ENCODE measurements at regions of chr4 and their contacts with region 1.

Region 1: GRCh38 chr4:26320538-26321325 is at the start of gene RBPJ:
- DNase-seq: peak in 1 of 2 donors; percentile 95
- H3K4me3 ChIP-seq: peak within 1 kb of the TSS; percentile 83 to 88
- H3K27ac ChIP-seq: peak within 1 kb of the TSS; percentile 98
- H3K4me1 ChIP-seq: peaks cover 49% of the 10 kb centered on the region
- H3K27me3 ChIP-seq: no peaks in the 10 kb centered on the region
- CTCF ChIP-seq: peak in 1 of 3 experiments; percentile 48
- POLR2A ChIP-seq: peak in 1 of 2 donors; percentile 56
- total RNA-seq, gene RBPJ: 50.8 TPM

Region 2: DNA sequence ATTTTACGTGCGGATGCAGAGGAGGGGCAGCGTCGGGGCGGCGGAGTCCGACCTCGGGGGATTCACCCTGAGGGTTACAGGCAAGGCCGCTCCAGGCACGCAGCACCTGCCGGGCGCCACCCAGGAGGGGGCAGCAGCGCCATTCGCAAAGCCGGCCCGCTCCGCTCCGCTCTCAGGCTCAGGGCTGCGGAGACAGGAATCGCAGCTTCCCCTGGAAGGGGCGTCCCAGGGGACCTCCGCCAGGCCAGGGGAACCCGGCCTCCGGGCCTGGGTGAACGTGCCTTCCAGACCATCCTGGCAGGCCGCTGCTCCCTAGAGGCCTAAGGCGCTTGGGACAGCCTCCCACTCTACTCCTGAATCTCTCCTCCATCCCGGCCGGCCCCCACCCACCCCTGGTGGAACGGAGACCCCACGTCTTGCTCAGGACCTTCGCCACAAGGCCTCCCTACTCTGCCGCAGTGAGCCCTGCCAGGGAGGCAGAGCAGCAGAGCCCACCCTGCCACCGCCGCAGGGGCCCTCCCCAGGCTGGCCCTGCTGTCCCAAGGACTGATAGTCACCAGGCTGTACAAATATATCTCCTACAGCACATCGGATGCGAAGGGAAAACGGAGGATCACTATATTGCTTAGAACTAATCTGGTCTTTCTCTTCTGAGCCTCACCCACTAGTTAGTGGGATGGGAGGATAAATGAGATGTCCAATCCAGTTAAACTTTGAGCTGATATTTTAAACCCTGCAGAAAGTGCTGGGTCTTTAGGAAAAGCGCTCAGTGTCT is 291.8 kb before region 1 on chr4:
- intact Hi-C with region 1: loop called (anchors 1 kb)
- DNase-seq: peak in 1 of 2 donors; percentile 86
- H3K4me3 ChIP-seq: peak overlapping the region in 1 of 2 donors; percentile 23
- H3K27ac ChIP-seq: peak overlapping the region; percentile 18
- H3K4me1 ChIP-seq: peaks cover 21% of the 10 kb centered on the region
- H3K27me3 ChIP-seq: no peaks in the 10 kb centered on the region
- CTCF ChIP-seq: peak; percentile 24 to 70 (median 60)
- POLR2A ChIP-seq: no peak

Region 3: GRCh38 chr4:26081795-26082498 is 238.8 kb before region 1 on chr4:
- intact Hi-C with region 1: loop called (anchors 5 kb)
- DNase-seq: no peak
- H3K4me3 ChIP-seq: no peak overlapping the region
- H3K27ac ChIP-seq: no peak overlapping the region
- H3K4me1 ChIP-seq: peaks cover 21% of the 10 kb centered on the region
- H3K27me3 ChIP-seq: no peaks in the 10 kb centered on the region
- CTCF ChIP-seq: peak; percentile 2 to 55 (median 51)
- POLR2A ChIP-seq: no peak

Region 4: DNA sequence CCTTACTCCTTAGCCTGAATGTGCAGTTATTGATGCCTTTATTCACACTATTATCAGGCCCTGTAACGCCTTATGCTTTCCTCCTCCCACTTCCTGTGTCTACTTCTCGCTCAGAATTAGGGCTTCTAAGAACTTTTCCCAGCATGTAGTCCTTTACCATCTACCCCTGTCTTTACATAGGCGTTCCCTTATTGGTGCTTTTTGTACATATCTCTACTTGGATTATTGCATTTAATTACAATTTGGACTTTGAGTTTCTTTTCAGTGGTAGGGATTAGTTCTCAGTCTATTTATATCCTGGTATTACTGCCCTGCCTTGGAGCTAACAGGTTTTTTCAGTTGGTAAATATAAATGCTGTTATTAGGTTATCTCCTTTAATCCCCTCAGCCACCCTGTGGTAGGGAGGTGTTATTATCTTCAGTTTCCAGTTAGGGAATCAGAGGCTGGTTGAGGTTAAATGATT is 84.0 kb after region 1 on chr4:
- intact Hi-C with region 1: loop called (anchors 10 kb)
- DNase-seq: no peak
- H3K4me3 ChIP-seq: no peak overlapping the region
- H3K27ac ChIP-seq: no peak overlapping the region
- H3K4me1 ChIP-seq: no peaks in the 10 kb centered on the region
- H3K27me3 ChIP-seq: no peaks in the 10 kb centered on the region
- CTCF ChIP-seq: no peak
- POLR2A ChIP-seq: no peak

Region 5: DNA sequence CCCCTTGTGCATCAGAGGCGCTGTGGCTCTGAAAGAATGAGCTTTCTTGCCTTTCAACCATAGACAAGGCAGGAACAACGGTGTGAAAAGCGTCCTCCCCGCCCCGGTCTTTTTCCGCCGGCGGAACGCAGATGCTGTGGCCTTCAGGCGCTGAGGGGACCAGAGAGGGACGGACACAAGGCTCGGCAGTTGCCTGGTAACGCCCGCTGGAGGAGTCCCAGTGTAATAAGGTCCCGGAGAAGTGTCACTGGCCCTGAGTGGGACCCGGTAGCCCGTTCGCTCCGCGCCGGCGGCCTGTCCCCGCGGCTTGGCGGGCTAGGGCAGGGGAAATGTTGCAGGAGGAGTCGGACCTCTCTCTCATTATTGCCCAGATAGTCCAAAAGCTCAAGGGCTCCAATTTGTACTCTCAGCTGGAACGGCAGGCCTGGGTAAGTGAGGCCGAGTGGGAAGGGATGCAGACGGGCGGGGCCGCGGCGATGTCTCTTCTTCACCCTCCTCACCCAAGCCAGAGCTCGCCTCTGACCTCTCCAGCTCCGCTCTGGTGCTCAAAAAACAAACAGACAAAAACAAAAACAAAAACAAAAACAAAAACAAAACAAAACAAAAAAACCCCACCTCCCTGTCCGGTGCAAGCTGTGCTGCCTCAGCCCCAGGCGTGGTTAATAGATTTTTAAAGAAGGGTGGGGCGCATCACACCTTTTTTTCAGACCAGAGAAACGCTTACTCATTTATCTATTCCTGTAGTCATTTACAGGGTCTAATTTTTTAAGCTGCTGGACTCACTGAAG is 263.3 kb after region 1 on chr4 and contains the start of gene TBC1D19:
- intact Hi-C with region 1: no loop called
- DNase-seq: peak in 1 of 2 donors; percentile 88
- H3K4me3 ChIP-seq: peak within 1 kb of the TSS; percentile 67 to 71
- H3K27ac ChIP-seq: peak within 1 kb of the TSS; percentile 62
- H3K4me1 ChIP-seq: peaks cover 15% of the 10 kb centered on the region
- H3K27me3 ChIP-seq: no peaks in the 10 kb centered on the region
- CTCF ChIP-seq: peak in 1 of 3 experiments; percentile 26
- POLR2A ChIP-seq: no peak
- total RNA-seq, gene TBC1D19: 10.8 TPM

Measured in vagina (tissue), 2 donors.